Breast epithelium (tissue), 4 donors: ENCODE measurements at regions of chr11 and their contacts with region 1.

Region 1: GRCh38 chr11:26662916-26663315 is 58.9 kb downstream of the SLC5A12 start:
- DNase-seq: no peak
- H3K4me3 ChIP-seq: no peak overlapping the region
- H3K27ac ChIP-seq: no peak overlapping the region
- H3K4me1 ChIP-seq: no peaks in the 10 kb centered on the region
- H3K27me3 ChIP-seq: no peaks in the 10 kb centered on the region
- CTCF ChIP-seq: no peak
- POLR2A ChIP-seq: no peak

Region 2: GRCh38 chr11:26649884-26650283 is 13.0 kb before region 1 on chr11:
- intact Hi-C with region 1: loop called (anchors 2 kb)
- DNase-seq: peak in 1 of 2 donors; percentile 39
- H3K4me3 ChIP-seq: no peak overlapping the region
- H3K27ac ChIP-seq: no peak overlapping the region
- H3K4me1 ChIP-seq: no peaks in the 10 kb centered on the region
- H3K27me3 ChIP-seq: no peaks in the 10 kb centered on the region
- CTCF ChIP-seq: peak; percentile 43 to 61 (median 55)
- POLR2A ChIP-seq: no peak

Region 3: DNA sequence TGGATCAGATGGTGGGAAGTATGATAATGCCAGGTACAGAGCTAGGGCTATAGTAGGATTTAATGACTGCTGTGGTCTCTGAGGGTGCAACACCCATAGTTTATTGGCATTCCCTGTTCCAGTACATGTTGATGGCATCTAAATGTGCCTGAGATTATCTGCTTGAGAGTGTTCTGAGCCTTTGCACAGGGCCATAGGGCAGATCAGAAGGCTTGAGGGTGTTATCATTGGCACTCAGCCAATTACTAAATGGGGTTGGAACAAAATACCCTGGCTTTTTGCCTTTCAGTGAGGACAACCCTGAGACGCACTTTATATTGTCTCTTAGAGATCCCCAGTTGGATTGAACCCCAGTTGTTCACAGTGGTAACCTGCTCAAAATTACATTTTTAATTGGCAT is 52.2 kb after region 1 on chr11:
- intact Hi-C with region 1: no loop called
- DNase-seq: no peak
- H3K4me3 ChIP-seq: no peak overlapping the region
- H3K27ac ChIP-seq: no peak overlapping the region
- H3K4me1 ChIP-seq: no peaks in the 10 kb centered on the region
- H3K27me3 ChIP-seq: no peaks in the 10 kb centered on the region
- CTCF ChIP-seq: no peak
- POLR2A ChIP-seq: no peak

Region 4: DNA sequence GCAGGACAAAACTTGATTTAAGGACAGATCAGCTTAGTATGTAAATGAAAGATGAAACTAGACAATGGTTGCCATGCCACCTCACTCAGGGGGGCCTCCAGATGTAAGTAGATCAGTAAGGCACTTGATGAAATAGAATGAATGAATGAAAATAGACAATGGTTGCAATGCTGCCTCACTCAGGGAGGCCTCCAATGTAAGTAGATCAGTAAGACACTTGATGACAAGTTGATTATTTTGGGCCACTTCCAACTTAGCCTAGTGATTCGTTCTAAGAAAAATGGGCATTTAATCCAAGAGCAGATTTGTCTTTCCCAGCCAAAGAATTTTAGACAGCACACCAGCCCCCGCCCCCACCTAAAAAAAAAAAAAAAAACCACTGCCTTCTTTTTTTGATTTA is 78.1 kb after region 1 on chr11:
- intact Hi-C with region 1: no loop called
- DNase-seq: no peak
- H3K4me3 ChIP-seq: no peak overlapping the region
- H3K27ac ChIP-seq: no peak overlapping the region
- H3K4me1 ChIP-seq: no peaks in the 10 kb centered on the region
- H3K27me3 ChIP-seq: no peaks in the 10 kb centered on the region
- CTCF ChIP-seq: no peak
- POLR2A ChIP-seq: no peak